Tibial artery (tissue), 4 donors: ENCODE measurements at regions of chr19 and their contacts with region 1.

Region 1: DNA sequence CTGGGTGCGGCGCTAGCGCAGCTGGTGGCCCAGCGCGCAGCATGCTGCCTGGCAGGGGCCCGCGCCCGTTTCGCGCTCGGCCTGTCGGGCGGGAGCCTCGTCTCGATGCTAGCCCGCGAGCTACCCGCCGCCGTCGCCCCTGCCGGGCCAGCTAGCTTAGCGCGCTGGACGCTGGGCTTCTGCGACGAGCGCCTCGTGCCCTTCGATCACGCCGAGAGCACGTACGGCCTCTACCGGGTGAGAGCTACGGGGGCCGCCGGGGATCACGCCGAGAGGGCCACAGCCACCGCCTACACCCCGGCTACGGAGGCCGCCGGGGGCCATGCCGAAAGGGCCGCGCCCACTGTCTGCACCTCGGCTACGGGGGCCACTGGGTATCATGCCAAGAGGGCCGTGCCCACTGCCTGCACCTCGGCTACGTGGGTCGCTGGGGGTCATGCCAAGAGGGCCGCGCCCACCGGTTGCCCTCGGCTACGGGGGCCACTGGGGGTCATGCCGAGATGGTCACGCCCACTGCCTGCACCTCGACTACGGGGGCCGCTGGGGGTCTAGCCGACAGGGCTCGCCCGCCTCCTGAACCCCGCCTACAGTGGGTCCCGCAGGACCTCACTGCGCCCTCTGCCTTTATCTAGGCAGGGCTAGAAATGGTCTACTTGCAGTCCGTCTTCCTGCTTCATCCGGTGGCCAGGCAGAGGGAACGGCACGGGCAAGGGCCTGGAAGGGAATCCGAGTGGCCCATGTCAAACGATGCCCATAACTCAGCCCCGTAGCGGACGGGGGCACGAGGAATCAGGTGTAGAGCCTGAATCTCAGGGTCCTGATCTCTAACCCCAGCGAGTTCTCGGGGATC is 500 bp downstream of the PGLS start:
- DNase-seq: peak; percentile 82 to 90
- H3K4me3 ChIP-seq: peak overlapping the region; percentile 64 to 83
- H3K27ac ChIP-seq: peak overlapping the region; percentile 89 to 97
- H3K4me1 ChIP-seq: peaks cover 0 to 31% (median 23%) of the 10 kb centered on the region in 4 donors
- H3K27me3 ChIP-seq: no peaks in the 10 kb centered on the region
- CTCF ChIP-seq: no peak

Region 2: GRCh38 chr19:17205237-17206140 is 306.5 kb before region 1 on chr19:
- intact Hi-C with region 1: no loop called
- DNase-seq: no peak
- H3K4me3 ChIP-seq: no peak overlapping the region
- H3K27ac ChIP-seq: no peak overlapping the region
- H3K4me1 ChIP-seq: no peaks in the 10 kb centered on the region
- H3K27me3 ChIP-seq: no peaks in the 10 kb centered on the region
- CTCF ChIP-seq: peak; percentile 39 to 48

Region 3: GRCh38 chr19:17555480-17555928 is 43.6 kb after region 1 on chr19 and contains the start of gene COLGALT1:
- intact Hi-C with region 1: loop called (anchors 5 kb)
- DNase-seq: peak; percentile 99 to 100
- H3K4me3 ChIP-seq: peak within 1 kb of the TSS; percentile 75 to 80
- H3K27ac ChIP-seq: peak within 1 kb of the TSS; percentile 75 to 76
- H3K4me1 ChIP-seq: peaks cover 0 to 26% (median 16%) of the 10 kb centered on the region in 4 donors
- H3K27me3 ChIP-seq: no peaks in the 10 kb centered on the region
- CTCF ChIP-seq: no peak